ENCODE measurements at regions of chr17 and their contacts with region 1.

Region 1: GRCh38 chr17:35312790-35313711 is 60.4 kb downstream of the SLFN11 start:
- DNase-seq: peak in 1 of 2 experiments; percentile 80
- H3K4me3 ChIP-seq: peak overlapping the region; percentile 41 to 69 (median 56); a peak in 7 of 8 replicates
- H3K27ac ChIP-seq: no peak overlapping the region
- H3K4me1 ChIP-seq: peaks cover 0 to 19% (median 10%) of the 10 kb centered on the region in 4 experiments; a peak in 6 of 7 replicates
- H3K27me3 ChIP-seq: peaks cover 2 to 17% (median 16%) of the 10 kb centered on the region in 4 experiments; a peak in 6 of 7 replicates
- CTCF ChIP-seq: peak in 2 of 3 experiments; percentile 80 to 85; a peak in 3 of 4 replicates
- EP300 ChIP-seq: no peak
- POLR2A ChIP-seq: no peak
- RAD21 ChIP-seq: peak; percentile 88 to 92

Region 2: GRCh38 chr17:35192708-35193107 is 120.3 kb before region 1 on chr17:
- CTCF ChIA-PET with region 1: no interaction called
- POLR2A ChIA-PET with region 1: no interaction called
- DNase-seq: no peak
- H3K4me3 ChIP-seq: no peak overlapping the region
- H3K27ac ChIP-seq: no peak overlapping the region
- H3K4me1 ChIP-seq: no peaks in the 10 kb centered on the region
- H3K27me3 ChIP-seq: no peaks in the 10 kb centered on the region
- CTCF ChIP-seq: no peak
- EP300 ChIP-seq: no peak
- POLR2A ChIP-seq: no peak
- RAD21 ChIP-seq: no peak

Region 3: DNA sequence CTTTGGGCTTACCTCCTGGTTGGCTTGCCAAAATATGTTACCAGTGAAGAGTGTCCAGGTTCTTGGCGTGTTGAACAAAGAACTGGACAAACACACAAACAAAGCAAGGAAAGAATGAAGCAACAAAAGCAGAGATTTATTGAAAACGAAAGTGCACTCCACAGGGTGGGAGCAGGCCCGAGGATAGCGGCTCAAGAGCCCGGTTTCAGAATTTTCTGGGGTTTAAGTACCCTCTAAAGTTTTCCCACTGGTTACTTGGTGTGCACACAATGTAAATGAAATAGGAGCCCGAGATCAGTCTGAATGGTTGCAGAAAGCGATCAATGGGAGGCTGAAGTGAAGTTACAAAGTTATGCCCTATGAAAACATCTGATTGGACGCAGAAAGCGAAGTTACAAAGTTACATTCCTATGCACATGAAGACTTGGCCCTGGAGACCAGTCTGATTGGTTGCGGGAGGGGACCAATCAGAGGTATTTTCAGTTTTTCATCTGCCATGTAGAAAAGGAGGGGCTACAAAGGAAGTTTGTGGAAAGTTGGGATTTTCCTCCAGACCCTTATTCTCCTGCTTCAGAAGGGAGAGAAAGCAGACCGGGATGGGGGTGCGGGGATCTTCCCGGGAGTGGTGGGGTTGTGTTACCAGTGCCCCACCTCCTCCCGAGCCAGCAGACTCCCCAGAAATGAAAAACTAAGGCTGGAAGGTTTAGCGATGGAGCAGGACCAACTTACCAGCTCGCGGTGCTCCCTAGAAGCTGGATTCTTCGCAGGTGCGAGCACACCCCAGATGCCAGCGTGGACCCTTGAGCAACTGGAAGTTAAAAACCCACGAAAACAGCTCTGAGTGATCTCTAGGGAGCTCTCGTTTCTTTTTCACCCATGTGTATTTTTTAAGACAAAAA is 119.4 kb after region 1 on chr17 and contains the start of gene SLFN12:
- CTCF ChIA-PET with region 1: interaction called, 10 read pairs
- POLR2A ChIA-PET with region 1: interaction called, 9 read pairs
- DNase-seq: peak; percentile 70 to 71
- H3K4me3 ChIP-seq: peak within 1 kb of the TSS; percentile 37 to 65 (median 56)
- H3K27ac ChIP-seq: peak within 1 kb of the TSS; percentile 53; the same call in 1 of the 2 replicates
- H3K4me1 ChIP-seq: peaks cover 0 to 14% (median 8%) of the 10 kb centered on the region in 4 experiments; a peak in 6 of 7 replicates
- H3K27me3 ChIP-seq: peaks cover 6 to 35% (median 21%) of the 10 kb centered on the region in 4 experiments
- CTCF ChIP-seq: no peak
- EP300 ChIP-seq: no peak
- POLR2A ChIP-seq: peak; percentile 43 to 86
- RAD21 ChIP-seq: no peak
- total RNA-seq, gene SLFN12: 9.4 and 10.7 TPM in 2 replicates

Region 4: DNA sequence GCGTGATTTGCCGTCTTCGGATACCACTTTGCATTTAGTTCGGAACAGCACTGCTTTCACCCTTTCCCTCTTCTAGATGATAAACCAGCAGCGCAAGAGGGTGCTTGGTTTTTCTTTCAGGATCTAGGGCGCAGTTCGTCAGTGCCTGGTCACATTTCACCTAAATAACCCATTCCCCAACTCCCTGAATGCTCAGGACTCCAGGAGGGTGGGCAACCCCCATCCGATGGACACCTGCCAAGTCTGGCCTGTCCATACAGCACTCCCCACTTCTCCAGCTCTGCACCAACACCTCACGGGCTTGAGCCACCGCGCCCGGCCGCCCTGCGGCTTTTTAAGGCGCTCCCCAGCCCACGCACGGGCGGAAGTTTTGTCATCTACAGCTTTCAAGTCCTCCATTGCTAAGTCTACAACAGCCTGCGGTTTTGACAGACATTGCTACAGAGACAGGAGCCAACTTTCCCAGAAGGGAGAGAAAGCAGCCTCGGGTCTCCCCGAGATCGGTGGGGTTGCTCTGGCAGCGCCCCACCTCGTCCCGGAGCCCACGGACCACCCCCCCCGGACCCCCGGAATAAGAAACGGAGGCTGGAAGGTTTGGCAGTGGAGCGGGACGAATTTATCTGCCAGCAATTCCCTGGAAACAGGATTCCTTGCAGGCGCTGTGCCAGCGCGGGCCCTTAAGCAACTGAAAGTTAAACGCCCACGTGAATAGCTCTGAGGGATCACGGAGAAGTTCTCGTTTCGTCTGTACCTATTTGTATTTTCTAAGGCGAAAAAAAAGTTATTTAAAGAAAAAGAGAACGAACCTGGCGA is 174.1 kb after region 1 on chr17:
- CTCF ChIA-PET with region 1: interaction called, 14 read pairs
- POLR2A ChIA-PET with region 1: no interaction called
- DNase-seq: peak in 1 of 2 experiments; percentile 55
- H3K4me3 ChIP-seq: peak overlapping the region in 3 of 4 experiments; percentile 23 to 45 (median 24); a peak in 4 of 8 replicates
- H3K27ac ChIP-seq: no peak overlapping the region
- H3K4me1 ChIP-seq: peaks cover 4 to 18% (median 8%) of the 10 kb centered on the region in 4 experiments; a peak in 6 of 7 replicates
- H3K27me3 ChIP-seq: peaks cover 66 to 97% (median 84%) of the 10 kb centered on the region in 4 experiments
- CTCF ChIP-seq: no peak
- EP300 ChIP-seq: no peak
- POLR2A ChIP-seq: no peak
- RAD21 ChIP-seq: no peak

Region 5: DNA sequence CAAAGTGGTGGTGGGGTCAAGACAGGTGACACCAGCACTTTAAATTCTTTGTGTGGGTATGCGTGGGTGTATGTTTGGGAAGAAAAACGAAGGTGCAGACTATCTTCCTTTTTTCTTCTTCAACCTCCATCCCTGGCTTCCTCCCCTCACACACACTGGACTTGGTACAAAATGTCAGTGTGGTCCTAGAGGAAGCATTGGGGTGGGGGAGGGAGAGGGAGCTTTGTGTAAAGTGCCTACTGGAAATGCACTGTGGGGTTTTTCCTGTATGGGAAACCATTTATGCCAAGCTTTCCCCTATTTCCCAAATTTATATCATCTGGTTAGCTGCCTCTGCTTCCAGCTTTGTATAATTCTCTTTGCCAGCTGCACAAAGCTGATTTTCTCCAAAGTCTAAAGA is 180.0 kb after region 1 on chr17:
- CTCF ChIA-PET with region 1: interaction called, 14 read pairs
- POLR2A ChIA-PET with region 1: no interaction called
- DNase-seq: no peak
- H3K4me3 ChIP-seq: no peak overlapping the region
- H3K27ac ChIP-seq: no peak overlapping the region
- H3K4me1 ChIP-seq: peaks cover 6 to 11% (median 8%) of the 10 kb centered on the region in 4 experiments
- H3K27me3 ChIP-seq: peaks cover 75 to 100% (median 94%) of the 10 kb centered on the region in 4 experiments
- CTCF ChIP-seq: no peak
- EP300 ChIP-seq: no peak
- POLR2A ChIP-seq: no peak
- RAD21 ChIP-seq: no peak

Region 6: DNA sequence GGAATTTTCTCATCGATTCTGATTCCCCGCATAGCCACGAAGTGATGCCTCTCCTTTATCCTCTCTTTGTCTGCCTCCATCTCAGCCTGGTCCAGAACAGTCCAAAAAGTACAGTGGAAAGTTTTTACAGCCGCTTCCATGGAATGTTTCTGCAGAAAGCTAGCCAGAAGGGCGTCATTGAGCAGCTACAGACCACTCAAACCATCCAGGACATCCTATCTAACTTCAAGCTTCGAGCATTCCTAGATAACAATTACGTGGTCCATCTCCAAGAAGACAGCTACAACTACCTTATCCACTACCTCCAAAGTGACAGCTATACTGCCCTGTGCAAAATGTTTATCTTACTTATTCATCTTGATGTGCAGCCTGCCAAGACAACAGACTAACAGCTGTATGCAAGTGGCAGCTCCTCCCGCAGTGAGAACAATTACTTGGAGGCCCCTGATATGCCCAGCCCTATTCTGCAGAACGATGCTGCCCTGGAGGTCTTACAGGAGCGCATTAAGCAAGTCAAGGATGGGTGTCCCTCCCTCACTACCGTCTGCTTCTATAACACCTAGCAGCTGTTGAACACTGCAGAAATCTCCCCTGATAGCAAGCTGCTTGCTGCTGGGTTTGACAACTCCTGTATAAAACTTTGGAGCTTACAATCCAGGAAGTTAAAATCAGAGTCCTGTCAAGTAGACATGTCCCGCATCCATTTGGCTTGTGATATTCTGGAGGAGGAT is 185.6 kb after region 1 on chr17:
- CTCF ChIA-PET with region 1: interaction called, 12 read pairs
- POLR2A ChIA-PET with region 1: no interaction called
- DNase-seq: no peak
- H3K4me3 ChIP-seq: peak overlapping the region in 1 of 4 experiments; percentile 42; a peak in 4 of 8 replicates
- H3K27ac ChIP-seq: no peak overlapping the region
- H3K4me1 ChIP-seq: peaks cover 3 to 9% (median 5%) of the 10 kb centered on the region in 4 experiments
- H3K27me3 ChIP-seq: peaks cover 49 to 77% (median 70%) of the 10 kb centered on the region in 4 experiments
- CTCF ChIP-seq: no peak
- EP300 ChIP-seq: no peak
- POLR2A ChIP-seq: no peak
- RAD21 ChIP-seq: no peak

Region 7: GRCh38 chr17:35531160-35531559 is 218.1 kb after region 1 on chr17:
- CTCF ChIA-PET with region 1: interaction called, 54 read pairs
- POLR2A ChIA-PET with region 1: interaction called, 4 read pairs
- DNase-seq: no peak
- H3K4me3 ChIP-seq: no peak overlapping the region
- H3K27ac ChIP-seq: no peak overlapping the region
- H3K4me1 ChIP-seq: no peaks in the 10 kb centered on the region
- H3K27me3 ChIP-seq: no peaks in the 10 kb centered on the region
- CTCF ChIP-seq: no peak
- EP300 ChIP-seq: no peak
- POLR2A ChIP-seq: no peak
- RAD21 ChIP-seq: no peak

Region 8: GRCh38 chr17:35540589-35541404 is 227.7 kb after region 1 on chr17:
- CTCF ChIA-PET with region 1: interaction called, 54 read pairs
- POLR2A ChIA-PET with region 1: no interaction called
- DNase-seq: no peak
- H3K4me3 ChIP-seq: no peak overlapping the region
- H3K27ac ChIP-seq: no peak overlapping the region
- H3K4me1 ChIP-seq: no peaks in the 10 kb centered on the region
- H3K27me3 ChIP-seq: no peaks in the 10 kb centered on the region
- CTCF ChIP-seq: no peak
- EP300 ChIP-seq: no peak
- POLR2A ChIP-seq: no peak
- RAD21 ChIP-seq: no peak

Measured in H1 (cell line).